ENCODE measurements at regions of chr5 and their contacts with region 1.

Region 1: GRCh38 chr5:128083033-128083810 is at the start of gene SLC12A2:
- DNase-seq: peak; percentile 93
- H3K4me3 ChIP-seq: peak within 1 kb of the TSS; percentile 32 to 94 (median 85)
- H3K27ac ChIP-seq: peak within 1 kb of the TSS; percentile 76
- H3K4me1 ChIP-seq: peaks cover 25% of the 10 kb centered on the region
- H3K27me3 ChIP-seq: no peaks in the 10 kb centered on the region
- CTCF ChIP-seq: no peak
- POLR2A ChIP-seq: peak; percentile 89
- total RNA-seq, gene SLC12A2: 41.7 and 59.5 TPM in 2 replicates

Region 2: DNA sequence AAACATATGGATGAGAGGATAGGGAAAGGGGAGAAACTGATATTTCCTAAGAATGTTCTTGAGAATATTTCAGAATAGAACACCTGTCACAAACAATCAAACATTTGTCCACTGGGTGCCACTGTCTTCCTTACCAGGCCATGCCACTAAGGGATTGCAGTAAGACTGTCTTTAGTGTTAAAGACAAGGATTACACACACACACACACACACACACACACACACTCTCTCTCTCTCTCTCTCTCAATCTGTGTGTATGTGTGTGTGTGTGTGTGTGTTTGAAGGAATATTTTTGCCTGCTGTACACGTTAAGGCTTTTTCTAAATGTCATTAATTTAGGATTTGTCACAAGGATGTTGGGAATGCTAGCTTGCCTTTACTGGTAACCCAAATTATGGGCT is 325.6 kb before region 1 on chr5:
- CTCF ChIA-PET with region 1: interaction called, 10 read pairs
- POLR2A ChIA-PET with region 1: no interaction called
- dilution Hi-C with region 1: no loop called
- intact Hi-C with region 1: loop called (anchors 1 kb)
- DNase-seq: peak; percentile 83
- H3K4me3 ChIP-seq: no peak overlapping the region
- H3K27ac ChIP-seq: no peak overlapping the region
- H3K4me1 ChIP-seq: peaks cover 4% of the 10 kb centered on the region
- H3K27me3 ChIP-seq: no peaks in the 10 kb centered on the region
- CTCF ChIP-seq: peak; percentile 33 to 37
- POLR2A ChIP-seq: no peak

Region 3: DNA sequence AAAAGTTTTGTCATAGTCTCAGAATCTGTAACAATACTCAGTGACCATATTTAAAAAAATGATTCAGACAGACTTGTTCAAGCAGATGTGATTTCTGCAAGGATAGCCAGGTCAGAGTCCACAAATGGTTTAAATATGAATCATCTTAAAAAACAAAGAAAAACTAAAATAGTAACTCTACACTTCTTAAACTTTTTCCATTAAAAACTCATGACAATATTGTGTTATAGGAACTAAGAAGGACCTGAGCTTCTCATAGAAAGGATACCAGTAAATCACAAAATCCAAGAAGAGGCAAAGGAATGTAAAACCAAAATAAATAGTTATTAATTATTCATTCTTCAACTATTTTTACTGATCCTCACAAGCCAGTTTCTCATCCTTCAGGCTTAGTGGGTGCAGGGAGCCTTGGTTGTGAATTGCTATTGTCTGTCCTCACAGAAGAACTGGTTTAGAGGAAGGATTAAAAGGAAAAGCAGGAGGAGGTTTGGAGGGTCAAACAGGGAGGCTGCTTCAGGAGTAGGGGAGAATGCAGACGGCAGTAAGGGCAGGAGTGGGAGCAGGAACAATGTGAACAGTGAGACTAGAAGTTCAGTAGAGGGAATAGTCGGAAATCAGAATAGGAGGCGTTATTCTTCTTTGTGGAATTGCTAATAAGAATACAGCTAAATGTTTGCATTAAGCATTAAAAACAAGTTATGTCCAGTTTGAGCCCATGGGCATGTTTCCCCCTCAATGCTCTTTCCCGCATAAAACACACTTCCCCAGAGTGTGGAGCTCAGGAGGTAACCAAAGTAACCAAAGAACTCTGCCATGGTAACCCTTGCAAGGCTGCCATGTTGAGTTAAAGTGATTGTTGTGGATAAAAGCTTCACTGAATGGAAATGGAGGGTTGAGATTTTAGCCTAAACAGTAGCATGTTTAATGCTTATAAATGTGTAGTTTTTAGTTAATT is 269.3 kb before region 1 on chr5:
- CTCF ChIA-PET with region 1: no interaction called
- POLR2A ChIA-PET with region 1: no interaction called
- dilution Hi-C with region 1: no loop called
- intact Hi-C with region 1: loop called (anchors 2 kb)
- DNase-seq: peak; percentile 83
- H3K4me3 ChIP-seq: no peak overlapping the region
- H3K27ac ChIP-seq: peak overlapping the region; percentile 76
- H3K4me1 ChIP-seq: peaks cover 23% of the 10 kb centered on the region
- H3K27me3 ChIP-seq: no peaks in the 10 kb centered on the region
- CTCF ChIP-seq: no peak
- POLR2A ChIP-seq: no peak

Region 4: DNA sequence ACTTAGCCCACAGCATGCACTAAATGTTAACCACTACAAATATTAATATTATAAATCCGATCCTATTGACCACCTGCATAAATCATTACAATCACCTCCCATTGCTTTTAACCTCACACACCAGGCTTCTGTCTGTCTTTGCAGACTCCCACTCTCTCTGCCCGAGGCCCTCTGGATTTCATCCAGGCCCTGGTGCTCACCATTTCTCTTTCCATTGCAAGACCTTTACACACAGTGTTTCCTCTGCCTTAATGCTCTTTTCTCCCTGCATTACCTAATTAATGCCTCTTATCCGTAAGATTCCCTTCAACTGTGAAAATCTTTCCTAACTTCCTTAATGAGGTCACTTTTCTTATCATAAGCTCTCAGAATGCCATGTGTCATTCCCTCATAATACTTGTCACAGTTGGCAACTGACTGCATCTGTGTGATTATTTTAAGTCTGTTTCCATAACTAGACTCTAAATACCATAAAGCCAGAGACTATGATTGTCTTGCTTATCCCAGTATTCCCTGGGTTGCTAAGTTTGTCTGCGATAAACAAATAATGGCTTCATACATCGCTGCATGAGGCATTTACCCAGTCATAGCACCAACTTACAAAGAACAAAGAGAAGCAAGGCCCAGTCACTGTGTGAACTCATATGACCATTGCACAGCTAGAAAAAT is 225.0 kb before region 1 on chr5:
- CTCF ChIA-PET with region 1: no interaction called
- POLR2A ChIA-PET with region 1: no interaction called
- dilution Hi-C with region 1: no loop called
- intact Hi-C with region 1: loop called (anchors 1 kb)
- DNase-seq: peak; percentile 89
- H3K4me3 ChIP-seq: no peak overlapping the region
- H3K27ac ChIP-seq: peak overlapping the region; percentile 84
- H3K4me1 ChIP-seq: peaks cover 27% of the 10 kb centered on the region
- H3K27me3 ChIP-seq: no peaks in the 10 kb centered on the region
- CTCF ChIP-seq: no peak
- POLR2A ChIP-seq: no peak

Region 5: GRCh38 chr5:127909078-127909477 is 174.1 kb before region 1 on chr5:
- CTCF ChIA-PET with region 1: interaction called, 18 read pairs
- POLR2A ChIA-PET with region 1: no interaction called
- dilution Hi-C with region 1: no loop called
- intact Hi-C with region 1: loop called (anchors 1 kb)
- DNase-seq: peak; percentile 68
- H3K4me3 ChIP-seq: no peak overlapping the region
- H3K27ac ChIP-seq: no peak overlapping the region
- H3K4me1 ChIP-seq: peaks cover 15% of the 10 kb centered on the region
- H3K27me3 ChIP-seq: no peaks in the 10 kb centered on the region
- CTCF ChIP-seq: peak; percentile 56 to 62
- POLR2A ChIP-seq: no peak

Region 6: GRCh38 chr5:128201065-128201926 is 118.1 kb after region 1 on chr5:
- CTCF ChIA-PET with region 1: interaction called, 11 read pairs
- POLR2A ChIA-PET with region 1: no interaction called
- dilution Hi-C with region 1: no loop called
- intact Hi-C with region 1: loop called (anchors 1 kb)
- DNase-seq: peak; percentile 63
- H3K4me3 ChIP-seq: no peak overlapping the region
- H3K27ac ChIP-seq: no peak overlapping the region
- H3K4me1 ChIP-seq: peaks cover 10% of the 10 kb centered on the region
- H3K27me3 ChIP-seq: no peaks in the 10 kb centered on the region
- CTCF ChIP-seq: peak; percentile 79 to 85
- POLR2A ChIP-seq: no peak

Region 7: DNA sequence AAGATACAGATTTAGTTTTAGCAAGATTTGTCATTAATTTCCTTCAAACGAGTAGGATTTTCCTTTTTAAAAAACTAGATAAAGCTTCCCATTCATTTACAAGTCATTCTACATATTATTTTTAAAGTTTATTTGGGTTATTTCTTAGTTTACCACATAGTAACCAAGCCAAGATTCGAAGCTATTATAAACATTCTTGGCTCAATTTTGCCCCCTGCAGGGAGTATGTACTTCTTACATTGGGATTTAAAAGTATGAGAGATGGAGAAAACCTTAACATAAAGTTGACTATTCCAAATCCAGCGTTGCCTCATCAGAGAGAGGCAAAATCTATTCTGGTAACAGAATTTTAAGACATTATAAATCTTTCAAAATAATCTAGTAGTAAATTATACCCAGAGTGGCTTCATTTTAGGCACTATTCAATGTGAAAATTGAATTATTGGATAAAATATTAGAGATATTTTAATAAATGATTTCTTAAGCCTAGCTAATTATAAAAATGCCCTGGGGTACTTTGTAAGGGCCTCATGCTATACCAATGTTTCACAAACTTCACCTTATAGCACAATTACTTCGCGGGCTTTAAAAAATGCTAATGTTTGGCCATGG is 415.7 kb after region 1 on chr5:
- CTCF ChIA-PET with region 1: no interaction called
- POLR2A ChIA-PET with region 1: no interaction called
- dilution Hi-C with region 1: no loop called
- intact Hi-C with region 1: loop called (anchors 2 kb)
- DNase-seq: peak; percentile 60
- H3K4me3 ChIP-seq: no peak overlapping the region
- H3K27ac ChIP-seq: no peak overlapping the region
- H3K4me1 ChIP-seq: no peaks in the 10 kb centered on the region
- H3K27me3 ChIP-seq: no peaks in the 10 kb centered on the region
- CTCF ChIP-seq: peak in 1 of 2 donors; percentile 15
- POLR2A ChIP-seq: no peak

Measured in endothelial cell of umbilical vein (primary cell).